ENCODE measurements at regions of chr9 and their contacts with region 1.

Region 1: DNA sequence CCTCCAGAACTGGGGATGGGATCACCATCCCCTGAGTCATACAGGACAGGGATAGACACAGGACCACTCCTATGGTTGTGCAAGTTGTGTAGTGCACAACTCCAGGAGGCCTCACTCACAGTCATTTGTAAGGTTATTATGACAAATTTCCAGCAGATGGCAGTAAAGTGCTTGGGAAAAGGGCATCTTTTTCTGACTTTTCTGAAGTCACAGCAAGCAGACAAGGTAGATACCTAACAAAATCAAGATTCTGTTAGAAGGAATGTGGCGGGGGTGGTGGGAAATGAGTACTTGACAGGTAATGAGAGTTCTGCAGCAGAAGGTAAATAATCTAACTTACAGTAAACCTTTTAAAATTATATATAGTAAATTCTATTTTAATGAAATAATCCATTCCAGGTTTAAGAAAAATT is 16.7 kb upstream of the KIF27 start:
- DNase-seq: no peak
- H3K4me3 ChIP-seq: no peak overlapping the region
- H3K27ac ChIP-seq: no peak overlapping the region
- H3K4me1 ChIP-seq: no peaks in the 10 kb centered on the region
- H3K27me3 ChIP-seq: no peaks in the 10 kb centered on the region
- CTCF ChIP-seq: peak; percentile 37 to 66 (median 38)

Region 2: GRCh38 chr9:84027201-84027600 is 89.3 kb after region 1 on chr9:
- intact Hi-C with region 1: no loop called
- DNase-seq: no peak
- H3K4me3 ChIP-seq: no peak overlapping the region
- H3K27ac ChIP-seq: no peak overlapping the region
- H3K4me1 ChIP-seq: no peaks in the 10 kb centered on the region
- H3K27me3 ChIP-seq: no peaks in the 10 kb centered on the region
- CTCF ChIP-seq: no peak

Region 3: DNA sequence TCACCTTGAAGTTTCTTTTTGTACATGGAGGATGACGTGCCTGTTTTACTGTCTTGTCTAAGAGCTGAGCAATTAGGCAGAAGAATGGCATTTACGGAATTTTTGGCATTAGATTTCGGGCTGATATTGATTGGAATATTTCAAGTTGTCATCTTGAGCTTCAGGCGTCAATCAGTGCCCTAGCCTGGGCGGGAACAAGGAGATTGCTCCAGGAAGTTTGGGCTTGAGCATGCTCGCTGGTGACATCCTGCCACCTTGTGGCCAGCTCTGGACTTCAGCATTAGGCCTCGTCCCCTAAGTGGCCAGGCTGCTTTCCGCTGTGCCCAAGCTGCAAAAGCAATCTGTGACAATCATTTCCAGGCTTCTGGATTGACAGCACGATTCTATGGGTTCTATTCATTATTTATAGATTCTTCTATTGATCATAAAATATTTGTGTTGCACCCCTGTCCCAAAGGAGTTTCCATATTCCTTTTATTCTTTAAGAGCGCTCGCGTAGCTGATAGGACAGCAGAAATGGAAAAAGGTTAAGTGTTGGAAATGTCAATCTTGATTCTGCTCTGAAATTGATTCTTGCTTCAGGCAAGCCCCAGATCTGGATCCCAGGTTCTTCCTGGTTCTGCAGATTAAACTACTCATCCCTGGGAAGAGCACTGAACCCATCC is 323.3 kb after region 1 on chr9:
- intact Hi-C with region 1: loop called (anchors 1 kb)
- DNase-seq: peak in 1 of 2 donors; percentile 79
- H3K4me3 ChIP-seq: peak overlapping the region; percentile 43 to 54
- H3K27ac ChIP-seq: no peak overlapping the region
- H3K4me1 ChIP-seq: no peaks in the 10 kb centered on the region
- H3K27me3 ChIP-seq: no peaks in the 10 kb centered on the region
- CTCF ChIP-seq: peak; percentile 69 to 87 (median 69)

Region 4: GRCh38 chr9:84315278-84315877 is 377.5 kb after region 1 on chr9:
- intact Hi-C with region 1: loop called (anchors 1 kb)
- DNase-seq: peak in 1 of 2 donors; percentile 64
- H3K4me3 ChIP-seq: no peak overlapping the region
- H3K27ac ChIP-seq: no peak overlapping the region
- H3K4me1 ChIP-seq: no peaks in the 10 kb centered on the region
- H3K27me3 ChIP-seq: no peaks in the 10 kb centered on the region
- CTCF ChIP-seq: peak; percentile 51 to 73 (median 56)

Region 5: DNA sequence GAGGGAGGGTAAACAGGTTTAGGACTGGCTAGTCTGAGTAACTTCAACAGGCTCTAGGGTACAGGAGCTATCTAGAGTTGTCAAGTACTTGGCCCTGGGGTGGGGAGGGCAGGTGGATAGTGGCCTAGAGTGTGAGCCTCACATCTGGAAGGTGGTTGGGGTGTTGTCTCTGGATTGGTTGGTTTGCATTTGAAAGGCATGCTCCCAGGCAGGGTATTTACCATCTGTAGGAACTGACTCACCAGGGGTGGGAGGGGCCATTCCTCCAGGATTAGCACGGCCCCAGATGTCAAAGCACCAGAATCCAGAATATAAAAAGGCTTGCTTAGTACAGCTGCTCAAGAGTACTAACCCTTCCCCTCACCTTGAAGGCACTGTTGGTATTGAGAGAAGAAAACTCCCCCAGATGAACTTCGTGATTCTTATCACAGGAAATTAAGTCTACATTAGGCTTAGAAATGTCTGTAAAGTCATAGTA is 924.9 kb after region 1 on chr9:
- intact Hi-C with region 1: no loop called
- DNase-seq: no peak
- H3K4me3 ChIP-seq: no peak overlapping the region
- H3K27ac ChIP-seq: no peak overlapping the region
- H3K4me1 ChIP-seq: peaks cover 0 to 2% of the 10 kb centered on the region in 2 donors
- H3K27me3 ChIP-seq: no peaks in the 10 kb centered on the region
- CTCF ChIP-seq: no peak